ENCODE measurements at regions of chr17 and their contacts with region 1.

Region 1: GRCh38 chr17:32127158-32127897 is 15.0 kb upstream of the RHOT1 start:
- DNase-seq: peak; percentile 55
- ATAC-seq: peak; percentile 90
- H3K4me3 Mint-ChIP-seq: peak overlapping the region; percentile 87
- H3K27ac Mint-ChIP-seq: peak overlapping the region; percentile 92
- H3K4me1 Mint-ChIP-seq: peaks cover 22% of the 10 kb centered on the region
- H3K27me3 Mint-ChIP-seq: no peaks in the 10 kb centered on the region
- CTCF ChIP-seq: no peak

Region 2: GRCh38 chr17:32142038-32142856 is 14.9 kb after region 1 on chr17 and contains the start of gene RHOT1:
- CTCF ChIA-PET with region 1: interaction called, 13 read pairs
- POLR2A ChIA-PET with region 1: no interaction called
- DNase-seq: peak; percentile 76
- ATAC-seq: peak; percentile 63
- H3K4me3 Mint-ChIP-seq: peak within 1 kb of the TSS; percentile 96
- H3K27ac Mint-ChIP-seq: peak within 1 kb of the TSS; percentile 97
- H3K4me1 Mint-ChIP-seq: peaks cover 25% of the 10 kb centered on the region
- H3K27me3 Mint-ChIP-seq: no peaks in the 10 kb centered on the region; the same call in none of the 2 replicates
- CTCF ChIP-seq: no peak
- total RNA-seq, gene RHOT1: 28.9 to 32.8 TPM (median 32.4 TPM) in 3 replicates

Measured in WTC11 (cell line).